Left colon (tissue), 2 donors: ENCODE measurements at regions of chr2 and their contacts with region 1.

Region 1: GRCh38 chr2:205766779-205767359 is 84.6 kb downstream of the NRP2 start:
- DNase-seq: peak; percentile 57 to 72
- ATAC-seq: no peak

Region 2: GRCh38 chr2:205685314-205686055 is 81.4 kb before region 1 on chr2:
- intact Hi-C with region 1: loop called in 1 of 2 experiments (anchors 5 kb)
- DNase-seq: no peak
- ATAC-seq: peak; percentile 29

Region 3: GRCh38 chr2:205885492-205886099 is 118.7 kb after region 1 on chr2:
- intact Hi-C with region 1: loop called in 1 of 2 experiments (anchors 5 kb)
- DNase-seq: peak; percentile 84 to 92
- ATAC-seq: peak; percentile 92

Region 4: GRCh38 chr2:206442833-206443734 is 676.2 kb after region 1 on chr2 and contains the start of gene ADAM23:
- intact Hi-C with region 1: no loop called
- DNase-seq: peak in 1 of 2 donors; percentile 15
- ATAC-seq: no peak
- total RNA-seq, gene ADAM23: 0.79 to 1.8 TPM